Heart right ventricle (tissue), 16 donors: ENCODE measurements at regions of chr1 and their contacts with region 1.

Region 1: DNA sequence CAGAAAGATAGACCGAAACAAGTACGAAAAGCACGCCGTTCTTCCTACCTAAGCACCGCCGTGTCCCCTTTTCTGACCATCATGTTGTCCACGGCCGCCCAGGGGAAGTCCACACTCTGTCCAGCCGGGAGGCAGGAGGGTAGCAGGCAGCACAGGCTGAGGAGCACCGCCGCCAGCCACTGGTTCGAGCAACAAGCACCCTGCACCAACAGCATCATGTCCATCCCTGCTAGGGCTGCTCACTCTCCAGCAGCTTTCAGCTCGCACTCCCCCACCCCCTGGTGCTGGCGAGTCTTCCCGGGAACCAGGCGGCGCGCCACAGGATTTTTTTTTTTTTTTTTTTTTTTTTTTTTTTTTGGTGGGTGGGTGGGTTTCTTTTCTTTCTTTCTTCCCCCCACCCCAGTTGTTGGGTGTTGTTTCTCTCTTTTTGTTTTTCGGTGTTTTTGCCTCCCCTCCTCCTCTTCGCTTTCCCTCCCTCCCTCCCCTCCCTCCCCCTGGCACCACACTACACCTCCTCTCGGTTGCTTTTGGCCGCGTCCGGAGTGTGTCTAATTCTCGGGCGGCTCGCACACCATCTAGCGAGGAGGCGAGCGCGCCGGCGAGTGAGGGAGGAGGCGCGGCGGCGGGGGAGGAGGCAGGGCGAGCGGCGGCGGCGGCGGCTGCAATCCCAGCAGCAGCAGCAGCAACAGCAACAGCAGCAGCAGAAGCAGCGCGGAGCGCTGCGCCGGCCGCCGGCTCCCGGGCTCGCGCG is at the start of gene NEGR1:
- DNase-seq: peak; percentile 76 to 86
- ATAC-seq: peak; percentile 80 to 96 (median 86)
- H3K4me3 ChIP-seq: peak within 1 kb of the TSS; percentile 54 to 78 (median 70)
- H3K27ac ChIP-seq: peak within 1 kb of the TSS; percentile 76 to 94 (median 90)
- H3K4me1 ChIP-seq: peaks cover 0 to 21% (median 10%) of the 10 kb centered on the region in 9 donors
- H3K27me3 ChIP-seq: peaks cover 0 to 3% (median 0%) of the 10 kb centered on the region in 7 donors
- CTCF ChIP-seq: peak in 2 of 9 donors; percentile 26 to 29
- total RNA-seq, gene NEGR1: 3.2 to 18.3 (median 5.6) TPM

Region 2: GRCh38 chr1:71587961-71588360 is 694.5 kb before region 1 on chr1:
- intact Hi-C with region 1: loop called in 1 of 10 experiments (anchors 10 kb)
- DNase-seq: no peak
- ATAC-seq: peak in 2 of 8 donors; percentile 43 to 49
- H3K4me3 ChIP-seq: no peak overlapping the region
- H3K27ac ChIP-seq: no peak overlapping the region
- H3K4me1 ChIP-seq: no peaks in the 10 kb centered on the region
- H3K27me3 ChIP-seq: no peaks in the 10 kb centered on the region
- CTCF ChIP-seq: peak in 8 of 9 donors; percentile 7 to 59 (median 50)

Region 3: GRCh38 chr1:71850936-71851335 is 431.5 kb before region 1 on chr1:
- intact Hi-C with region 1: loop called in 1 of 10 experiments (anchors 10 kb)
- DNase-seq: no peak
- ATAC-seq: peak in 6 of 8 donors; percentile 28 to 73 (median 57)
- H3K4me3 ChIP-seq: no peak overlapping the region
- H3K27ac ChIP-seq: no peak overlapping the region
- H3K4me1 ChIP-seq: no peaks in the 10 kb centered on the region
- H3K27me3 ChIP-seq: no peaks in the 10 kb centered on the region
- CTCF ChIP-seq: no peak

Region 4: DNA sequence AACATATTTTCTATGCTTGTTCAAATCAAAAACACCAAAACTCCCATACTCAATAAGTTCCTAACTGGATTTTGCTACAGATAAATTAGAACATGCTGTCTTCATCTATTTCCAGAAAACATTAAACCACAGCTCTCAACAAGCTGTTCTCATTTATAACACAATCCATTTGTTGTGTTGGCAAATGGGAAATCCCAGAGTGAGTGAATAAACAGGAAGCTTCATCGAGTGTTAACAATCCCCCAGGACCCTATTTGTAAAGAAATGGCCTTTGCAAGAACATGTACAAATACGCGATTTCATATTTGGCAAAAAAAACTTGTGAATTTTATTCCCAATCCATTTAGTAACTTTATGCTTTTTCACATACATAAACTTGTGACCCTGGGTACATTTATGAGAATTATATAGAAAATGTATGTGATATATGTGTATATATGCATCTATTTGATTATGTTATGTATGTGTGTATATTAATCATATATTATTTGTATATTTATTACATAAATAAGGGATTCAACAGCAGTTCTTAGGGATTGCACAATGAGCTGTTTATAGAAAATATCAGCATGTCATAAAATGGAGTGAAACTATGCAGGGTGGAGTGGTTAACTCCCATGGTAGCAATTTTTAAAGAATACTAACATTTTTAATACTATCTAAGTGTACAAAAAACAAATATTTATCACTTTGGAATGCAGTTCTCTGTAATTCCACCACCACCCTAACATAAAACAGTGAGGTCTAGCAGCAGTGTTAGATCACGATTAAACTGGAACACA is 160.2 kb before region 1 on chr1:
- intact Hi-C with region 1: loop called in 1 of 10 experiments (anchors 10 kb)
- DNase-seq: no peak
- ATAC-seq: peak in 7 of 8 donors; percentile 68 to 86 (median 82)
- H3K4me3 ChIP-seq: no peak overlapping the region
- H3K27ac ChIP-seq: peak overlapping the region in 4 of 10 donors; percentile 4 to 54 (median 18)
- H3K4me1 ChIP-seq: peaks cover 0 to 7% (median 0%) of the 10 kb centered on the region in 9 donors
- H3K27me3 ChIP-seq: no peaks in the 10 kb centered on the region
- CTCF ChIP-seq: no peak

Region 5: GRCh38 chr1:72230746-72231145 is 51.7 kb before region 1 on chr1:
- intact Hi-C with region 1: no loop called
- DNase-seq: no peak
- ATAC-seq: no peak
- H3K4me3 ChIP-seq: no peak overlapping the region
- H3K27ac ChIP-seq: no peak overlapping the region
- H3K4me1 ChIP-seq: no peaks in the 10 kb centered on the region
- H3K27me3 ChIP-seq: no peaks in the 10 kb centered on the region
- CTCF ChIP-seq: no peak

Region 6: DNA sequence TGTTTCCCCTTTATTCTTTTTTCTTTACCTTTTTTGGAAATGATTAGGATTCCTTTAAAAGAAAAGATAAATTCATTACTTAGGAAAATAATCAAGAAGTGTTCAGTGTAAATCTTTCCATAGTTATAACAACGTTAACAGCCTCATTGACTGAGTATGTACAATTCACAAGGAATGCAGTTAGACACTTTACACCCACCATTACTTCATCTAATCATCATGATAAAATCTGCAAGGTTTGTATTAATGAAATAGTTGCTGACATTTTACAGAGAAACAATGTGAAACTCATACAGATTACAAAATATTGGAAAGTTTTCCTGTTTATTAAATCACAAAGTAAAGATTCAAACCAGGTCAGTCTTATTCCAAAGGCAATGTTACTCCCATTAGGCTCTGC is 59.2 kb after region 1 on chr1:
- intact Hi-C with region 1: loop called in 1 of 10 experiments (anchors 10 kb)
- DNase-seq: no peak
- ATAC-seq: no peak
- H3K4me3 ChIP-seq: no peak overlapping the region
- H3K27ac ChIP-seq: no peak overlapping the region
- H3K4me1 ChIP-seq: no peaks in the 10 kb centered on the region
- H3K27me3 ChIP-seq: no peaks in the 10 kb centered on the region
- CTCF ChIP-seq: no peak